GM18951 (cell line): ENCODE measurements at regions of chr2 and their contacts with region 1.

Region 1: GRCh38 chr2:237059155-237059875 is 26.4 kb upstream of the COPS8 start:
- POLR2A ChIP-seq: no peak

Region 2: GRCh38 chr2:236512902-236513435 is 546.3 kb before region 1 on chr2:
- in situ Hi-C with region 1: loop called (anchors 10 kb)
- POLR2A ChIP-seq: no peak

Region 3: DNA sequence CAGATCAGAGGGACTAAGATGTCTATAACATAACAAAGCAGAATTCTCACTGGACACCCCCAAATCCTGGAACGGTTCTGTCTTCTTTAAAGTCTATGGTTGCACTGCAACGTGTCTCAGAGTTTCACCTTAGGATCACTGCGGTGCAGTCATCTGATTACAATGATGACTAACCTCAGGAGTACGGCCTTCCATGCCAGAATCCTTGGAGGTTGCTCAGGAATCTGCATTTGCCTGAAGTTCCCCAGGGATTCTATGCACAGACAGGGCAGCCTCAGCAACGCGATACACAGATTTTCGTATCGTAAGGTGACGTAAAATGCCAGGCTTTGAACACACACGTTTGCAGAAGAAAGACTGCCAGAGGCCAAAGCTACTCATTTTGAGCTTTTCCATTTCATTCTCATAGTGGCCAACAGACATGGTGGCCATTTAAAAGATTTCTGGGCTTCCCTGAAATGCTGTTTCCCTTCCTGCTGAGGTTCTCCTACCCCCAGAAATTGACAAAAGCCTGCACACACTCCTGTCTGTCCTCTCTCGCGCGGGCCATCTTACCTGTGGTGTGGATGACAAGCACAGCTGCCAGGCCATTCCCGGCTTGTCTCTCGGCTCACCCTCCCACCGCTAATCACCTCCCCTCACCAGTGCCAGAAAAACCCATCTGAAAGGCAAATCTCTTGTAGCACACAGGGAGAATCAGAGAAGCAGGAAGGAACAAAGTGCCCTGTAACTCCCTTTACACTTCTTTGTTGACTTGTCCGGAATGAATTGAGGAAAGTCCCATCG is 340.9 kb before region 1 on chr2:
- in situ Hi-C with region 1: no loop called
- POLR2A ChIP-seq: no peak